Caco-2 (cell line): ENCODE measurements at regions of chr2 and their contacts with region 1.

Region 1: DNA sequence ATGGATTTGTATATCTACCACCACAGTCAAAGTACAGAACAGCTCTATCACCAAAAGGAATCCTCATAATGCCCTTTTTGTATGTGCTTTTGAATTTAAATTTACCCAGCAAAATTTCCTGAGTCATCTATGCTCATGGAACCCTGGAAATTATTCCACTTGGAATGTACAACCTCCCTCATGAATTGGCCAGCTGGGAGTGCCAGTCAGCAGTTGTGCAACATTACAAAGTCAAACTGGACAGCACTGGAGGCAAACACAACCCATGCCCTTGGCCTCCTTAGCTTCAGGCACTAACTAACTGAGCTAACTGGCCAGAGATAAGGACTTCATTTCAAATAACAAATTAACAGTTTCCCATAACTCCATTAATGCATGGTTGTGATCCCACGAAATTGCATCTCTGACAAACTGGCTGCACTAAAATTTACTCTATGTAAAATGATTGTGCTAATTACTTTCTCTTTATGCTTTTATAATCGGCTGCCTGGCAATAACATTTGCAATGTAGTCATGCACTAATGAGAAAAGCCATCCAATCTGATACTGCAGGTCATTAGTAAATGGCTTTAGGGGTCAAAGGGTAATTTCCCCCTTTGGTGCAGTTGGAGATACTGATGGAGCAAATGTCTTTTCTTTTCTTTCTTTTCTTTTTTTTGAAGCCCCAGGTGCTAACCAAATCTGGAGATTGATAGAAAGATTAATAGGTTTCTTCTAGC is 270.5 kb downstream of the ACTR3 start:
- DNase-seq: peak; percentile 12 to 37
- H3K4me3 ChIP-seq: no peak overlapping the region
- H3K4me3 Mint-ChIP-seq: no peak overlapping the region
- H3K27ac Mint-ChIP-seq: no peak overlapping the region
- H3K4me1 ChIP-seq: no peaks in the 10 kb centered on the region
- H3K4me1 Mint-ChIP-seq: peaks cover 7% of the 10 kb centered on the region
- H3K27me3 ChIP-seq: no peaks in the 10 kb centered on the region
- H3K27me3 Mint-ChIP-seq: no peaks in the 10 kb centered on the region
- CTCF ChIP-seq: no peak

Region 2: GRCh38 chr2:113251118-113251517 is 909.3 kb before region 1 on chr2:
- CTCF ChIA-PET with region 1: no interaction called
- POLR2A ChIA-PET with region 1: no interaction called
- intact Hi-C with region 1: no loop called
- DNase-seq: no peak
- H3K4me3 ChIP-seq: no peak overlapping the region
- H3K4me3 Mint-ChIP-seq: no peak overlapping the region
- H3K27ac Mint-ChIP-seq: no peak overlapping the region
- H3K4me1 ChIP-seq: 0 out of 2 replicates have a peak, but pooled peaks cover 15% of the 10 kb centered on the region
- H3K4me1 Mint-ChIP-seq: peaks cover 7% of the 10 kb centered on the region
- H3K27me3 ChIP-seq: no peaks in the 10 kb centered on the region
- H3K27me3 Mint-ChIP-seq: no peaks in the 10 kb centered on the region
- CTCF ChIP-seq: no peak

Region 3: GRCh38 chr2:113784823-113785744 is 375.3 kb before region 1 on chr2:
- CTCF ChIA-PET with region 1: no interaction called
- POLR2A ChIA-PET with region 1: no interaction called
- intact Hi-C with region 1: no loop called
- DNase-seq: no peak
- H3K4me3 ChIP-seq: no peak overlapping the region
- H3K4me3 Mint-ChIP-seq: no peak overlapping the region
- H3K27ac Mint-ChIP-seq: no peak overlapping the region
- H3K4me1 ChIP-seq: no peaks in the 10 kb centered on the region
- H3K4me1 Mint-ChIP-seq: no peaks in the 10 kb centered on the region
- H3K27me3 ChIP-seq: no peaks in the 10 kb centered on the region
- H3K27me3 Mint-ChIP-seq: no peaks in the 10 kb centered on the region
- CTCF ChIP-seq: no peak

Region 4: GRCh38 chr2:114068438-114068837 is 92.0 kb before region 1 on chr2:
- CTCF ChIA-PET with region 1: no interaction called
- POLR2A ChIA-PET with region 1: no interaction called
- intact Hi-C with region 1: loop called (anchors 10 kb)
- DNase-seq: peak in 1 of 2 experiments; percentile 46
- H3K4me3 ChIP-seq: no peak overlapping the region
- H3K4me3 Mint-ChIP-seq: no peak overlapping the region
- H3K27ac Mint-ChIP-seq: no peak overlapping the region
- H3K4me1 ChIP-seq: no peaks in the 10 kb centered on the region; the same call in 1 of the 2 replicates
- H3K4me1 Mint-ChIP-seq: no peaks in the 10 kb centered on the region
- H3K27me3 ChIP-seq: no peaks in the 10 kb centered on the region; the same call in 1 of the 2 replicates
- H3K27me3 Mint-ChIP-seq: peaks cover 6% of the 10 kb centered on the region
- CTCF ChIP-seq: no peak